ENCODE measurements at regions of chr6 and their contacts with region 1.

Region 1: DNA sequence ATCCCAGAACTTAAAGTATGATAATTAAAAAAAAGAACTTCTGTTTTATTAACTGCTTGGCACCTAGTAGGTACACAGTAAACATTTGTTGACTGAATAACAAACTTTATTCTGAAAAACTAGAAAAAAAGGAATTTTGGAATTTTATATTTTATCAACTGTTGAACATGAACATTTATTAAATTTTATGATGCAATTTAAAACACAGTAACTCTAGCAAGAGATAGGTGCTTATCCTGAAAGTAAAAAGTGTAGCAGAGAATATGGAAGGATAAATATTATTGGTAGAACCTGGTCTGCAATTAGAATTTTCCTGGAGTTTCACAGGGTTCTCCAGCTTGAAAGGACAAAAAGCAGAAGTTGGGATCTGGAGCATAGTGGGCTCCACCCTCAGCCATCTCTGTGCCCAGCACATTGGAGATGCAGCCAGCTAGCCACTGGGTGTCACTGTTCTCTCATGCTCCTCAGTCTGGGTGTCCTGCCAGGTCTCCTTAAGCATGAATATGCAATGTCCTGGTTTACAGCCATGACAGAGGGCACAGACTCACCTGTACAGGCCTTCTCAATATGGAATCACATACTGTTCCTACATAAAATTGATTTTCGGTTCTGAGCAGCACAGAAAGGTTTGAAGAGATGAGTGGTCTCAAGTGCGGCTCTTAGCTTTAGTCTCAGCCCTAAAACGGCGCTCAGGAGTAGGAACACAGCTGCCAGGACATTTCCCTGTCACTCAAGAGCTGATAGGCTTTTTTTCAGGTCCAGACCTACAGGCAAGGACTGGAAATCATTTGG is 31.7 kb upstream of the IL20RA start:
- DNase-seq: peak; percentile 49 to 82 (median 58)
- ATAC-seq: peak; percentile 100
- H3K4me3 ChIP-seq: no peak overlapping the region
- H3K27ac ChIP-seq: no peak overlapping the region
- H3K4me1 ChIP-seq: no peaks in the 10 kb centered on the region
- H3K27me3 ChIP-seq: 0 out of 5 replicates have a peak, but pooled peaks cover 4% of the 10 kb centered on the region in 2 experiments
- CTCF ChIP-seq: peak; percentile 91 to 96 (median 94)
- EP300 ChIP-seq: no peak
- POLR2A ChIP-seq: no peak
- RAD21 ChIP-seq: peak; percentile 96 to 98

Region 2: GRCh38 chr6:136846046-136846445 is 230.4 kb before region 1 on chr6:
- CTCF ChIA-PET with region 1: no interaction called
- POLR2A ChIA-PET with region 1: no interaction called
- in situ Hi-C with region 1: no loop called
- intact Hi-C with region 1: loop called (anchors 5 kb)
- DNase-seq: peak; percentile 49 to 75 (median 51)
- ATAC-seq: peak; percentile 85
- H3K4me3 ChIP-seq: no peak overlapping the region
- H3K27ac ChIP-seq: no peak overlapping the region
- H3K4me1 ChIP-seq: no peaks in the 10 kb centered on the region
- H3K27me3 ChIP-seq: no peaks in the 10 kb centered on the region
- CTCF ChIP-seq: peak; percentile 62 to 86 (median 68); a peak in 5 of 6 replicates
- EP300 ChIP-seq: no peak
- POLR2A ChIP-seq: no peak
- RAD21 ChIP-seq: peak; percentile 72 to 85

Region 3: DNA sequence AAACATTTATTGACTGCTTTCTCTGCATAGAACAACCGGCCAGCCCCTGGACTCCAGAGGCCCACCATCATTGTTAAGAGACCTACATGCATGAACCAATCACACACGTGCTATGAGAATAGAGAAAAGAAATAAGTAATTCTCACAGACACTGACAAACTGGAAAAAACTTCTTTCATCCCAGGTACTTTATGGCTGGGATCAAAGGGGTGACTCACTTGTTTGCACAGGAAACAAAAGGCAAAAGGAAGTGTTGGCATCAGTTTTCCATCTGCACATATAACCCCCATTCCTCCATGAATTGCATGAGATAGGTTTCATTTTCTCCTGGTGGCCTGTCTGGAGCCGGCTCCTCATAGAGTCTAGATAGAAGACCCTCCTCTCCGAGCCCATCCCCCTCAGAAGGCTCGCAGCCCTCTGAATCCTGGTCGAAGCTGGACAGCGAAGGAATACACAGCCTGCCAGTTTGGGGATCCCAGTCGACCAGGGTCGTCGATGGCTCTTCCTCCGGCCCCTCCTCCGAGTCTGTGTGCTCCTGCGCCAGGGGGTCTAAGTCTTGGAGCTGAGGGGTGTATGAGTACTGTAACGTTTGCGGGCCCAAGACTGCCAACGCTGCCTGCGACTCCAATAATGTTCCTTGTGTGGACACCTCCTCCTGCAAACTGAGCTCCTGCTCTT is 75.0 kb before region 1 on chr6:
- CTCF ChIA-PET with region 1: no interaction called
- POLR2A ChIA-PET with region 1: no interaction called
- in situ Hi-C with region 1: no loop called
- intact Hi-C with region 1: no loop called
- DNase-seq: no peak
- ATAC-seq: no peak
- H3K4me3 ChIP-seq: no peak overlapping the region
- H3K27ac ChIP-seq: no peak overlapping the region
- H3K4me1 ChIP-seq: no peaks in the 10 kb centered on the region
- H3K27me3 ChIP-seq: peaks cover 12 to 25% of the 10 kb centered on the region in 2 experiments
- CTCF ChIP-seq: no peak
- EP300 ChIP-seq: no peak
- POLR2A ChIP-seq: no peak
- RAD21 ChIP-seq: no peak

Region 4: GRCh38 chr6:137089305-137089704 is 12.8 kb after region 1 on chr6:
- CTCF ChIA-PET with region 1: no interaction called
- POLR2A ChIA-PET with region 1: interaction called, 11 read pairs
- in situ Hi-C with region 1: no loop called
- intact Hi-C with region 1: no loop called
- DNase-seq: no peak
- ATAC-seq: no peak
- H3K4me3 ChIP-seq: no peak overlapping the region
- H3K27ac ChIP-seq: no peak overlapping the region
- H3K4me1 ChIP-seq: no peaks in the 10 kb centered on the region
- H3K27me3 ChIP-seq: peaks cover 4 to 5% of the 10 kb centered on the region in 2 experiments; a peak in 2 of 5 replicates
- CTCF ChIP-seq: no peak
- EP300 ChIP-seq: no peak
- POLR2A ChIP-seq: no peak
- RAD21 ChIP-seq: no peak

Region 5: GRCh38 chr6:137165375-137166246 is 89.1 kb after region 1 on chr6:
- CTCF ChIA-PET with region 1: no interaction called
- POLR2A ChIA-PET with region 1: no interaction called
- in situ Hi-C with region 1: no loop called
- intact Hi-C with region 1: loop called (anchors 1 kb)
- DNase-seq: peak in 3 of 4 experiments; percentile 28 to 76 (median 45)
- ATAC-seq: peak; percentile 78
- H3K4me3 ChIP-seq: no peak overlapping the region
- H3K27ac ChIP-seq: no peak overlapping the region
- H3K4me1 ChIP-seq: peaks cover 0 to 34% of the 10 kb centered on the region in 2 experiments; a peak in 4 of 5 replicates
- H3K27me3 ChIP-seq: no peaks in the 10 kb centered on the region
- CTCF ChIP-seq: peak; percentile 71 to 75 (median 73)
- EP300 ChIP-seq: no peak
- POLR2A ChIP-seq: no peak
- RAD21 ChIP-seq: peak; percentile 82 to 88; a peak in 3 of 4 replicates

Region 6: DNA sequence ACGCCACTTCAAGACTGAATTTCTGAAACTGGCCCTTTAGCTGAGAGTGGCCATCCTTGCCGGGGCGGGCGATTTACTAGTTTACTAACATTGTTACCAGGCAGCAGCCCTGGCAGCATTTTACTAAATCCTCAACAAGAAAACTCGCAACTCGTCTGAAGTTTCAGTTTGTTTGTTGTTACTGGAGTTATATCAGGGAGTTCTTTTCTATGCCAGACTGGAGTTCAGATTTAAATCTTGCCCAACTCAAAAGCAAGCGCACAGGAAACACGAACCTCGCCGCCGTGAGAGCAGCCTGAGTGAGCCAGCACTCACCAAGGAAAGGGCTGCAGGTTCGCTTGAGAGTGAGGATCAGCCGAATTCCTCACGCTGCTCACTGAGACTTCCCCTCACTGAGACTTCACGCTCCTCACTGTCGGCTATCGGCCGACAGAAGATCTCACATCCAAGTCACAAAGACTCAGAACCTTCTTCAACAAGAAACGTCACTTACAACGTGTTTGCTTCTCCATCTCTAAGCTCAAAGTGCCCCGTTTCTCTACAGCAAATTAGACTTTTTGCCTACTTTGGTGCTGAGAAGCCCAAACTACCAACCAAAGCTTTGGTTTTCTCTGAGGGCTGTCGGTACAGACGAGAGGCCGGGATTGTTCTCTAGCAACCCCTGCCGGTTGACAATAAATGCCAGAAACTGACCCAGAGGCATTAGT is 338.8 kb after region 1 on chr6:
- CTCF ChIA-PET with region 1: no interaction called
- POLR2A ChIA-PET with region 1: no interaction called
- in situ Hi-C with region 1: no loop called
- intact Hi-C with region 1: loop called (anchors 5 kb)
- DNase-seq: peak in 3 of 4 experiments; percentile 16 to 52 (median 42)
- ATAC-seq: peak; percentile 98
- H3K4me3 ChIP-seq: no peak overlapping the region
- H3K27ac ChIP-seq: no peak overlapping the region
- H3K4me1 ChIP-seq: no peaks in the 10 kb centered on the region; a peak in 1 of 5 replicates
- H3K27me3 ChIP-seq: peaks cover 14 to 29% of the 10 kb centered on the region in 2 experiments; a peak in 4 of 5 replicates
- CTCF ChIP-seq: peak; percentile 59 to 77 (median 74)
- EP300 ChIP-seq: no peak
- POLR2A ChIP-seq: no peak
- RAD21 ChIP-seq: peak; percentile 57 to 70

Measured in K562 (cell line).